Breast epithelium (tissue), 4 donors: ENCODE measurements at regions of chr7 and their contacts with region 1.

Region 1: GRCh38 chr7:47069385-47070076 is 512.4 kb downstream of the TNS3 start:
- DNase-seq: no peak
- H3K4me3 ChIP-seq: no peak overlapping the region
- H3K27ac ChIP-seq: no peak overlapping the region
- H3K4me1 ChIP-seq: no peaks in the 10 kb centered on the region
- H3K27me3 ChIP-seq: no peaks in the 10 kb centered on the region
- CTCF ChIP-seq: no peak
- POLR2A ChIP-seq: no peak

Region 2: DNA sequence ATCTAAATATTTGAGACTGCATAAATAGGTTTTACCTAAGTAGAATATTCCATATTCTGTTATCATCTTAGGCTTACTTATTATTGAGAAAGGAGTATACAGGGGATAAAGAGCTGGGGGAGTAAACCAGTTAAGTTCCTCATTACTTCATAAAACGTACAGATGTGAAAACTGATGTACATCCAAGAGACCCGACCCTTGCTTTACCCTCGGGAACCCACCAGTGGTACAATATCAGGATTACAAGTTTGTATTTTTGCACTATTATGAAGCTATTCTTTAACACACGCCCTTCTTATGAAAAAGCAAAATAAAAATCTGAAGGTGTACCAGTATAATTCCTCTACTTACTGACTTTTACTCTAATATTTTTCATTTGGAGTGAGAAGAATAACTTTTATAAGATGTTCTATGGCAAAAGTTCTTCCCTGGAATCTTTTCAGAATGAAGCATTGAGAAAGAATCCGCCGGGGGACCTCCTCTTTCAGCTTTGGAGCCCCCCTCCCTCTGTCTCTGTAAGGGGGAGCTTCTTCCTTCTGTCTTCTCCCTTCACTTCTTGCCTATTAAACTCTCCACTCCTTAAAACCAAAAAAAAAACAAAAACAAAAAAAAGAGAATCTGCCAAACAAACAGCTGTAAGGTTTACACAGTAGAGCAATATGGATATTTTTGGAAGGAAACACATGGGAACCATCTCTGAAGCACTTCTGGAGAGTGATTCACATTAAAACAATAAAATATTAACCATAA is 37.6 kb before region 1 on chr7:
- intact Hi-C with region 1: loop called (anchors 2 kb)
- DNase-seq: no peak
- H3K4me3 ChIP-seq: no peak overlapping the region
- H3K27ac ChIP-seq: no peak overlapping the region
- H3K4me1 ChIP-seq: no peaks in the 10 kb centered on the region
- H3K27me3 ChIP-seq: no peaks in the 10 kb centered on the region
- CTCF ChIP-seq: no peak
- POLR2A ChIP-seq: no peak